ENCODE measurements at regions of chr2 and their contacts with region 1.

Region 1: DNA sequence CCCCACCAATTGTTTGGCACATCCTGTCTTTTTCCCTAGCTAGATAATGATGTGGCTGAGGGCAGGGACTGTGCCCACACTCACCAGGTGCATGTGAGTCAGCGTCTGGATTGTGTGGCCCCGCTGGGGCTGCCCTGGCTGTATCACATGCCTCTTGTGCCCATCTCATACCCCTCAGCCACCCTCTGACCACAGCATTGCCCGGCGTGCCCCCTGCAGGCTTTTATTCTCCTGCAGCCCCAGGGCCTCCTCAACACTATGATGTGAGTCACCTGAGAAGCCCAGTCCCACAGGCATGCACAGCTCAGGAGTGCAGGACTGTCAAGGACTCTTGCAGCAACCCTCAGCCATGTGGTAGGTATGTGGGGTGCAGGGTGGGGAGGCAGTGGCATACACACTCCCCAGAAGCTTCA is 14.8 kb upstream of the STEAP3 start:
- DNase-seq: peak; percentile 97 to 99
- H3K4me3 ChIP-seq: no peak overlapping the region
- H3K27ac ChIP-seq: peak overlapping the region; percentile 47
- H3K4me1 ChIP-seq: peaks cover 49% of the 10 kb centered on the region
- H3K27me3 ChIP-seq: no peaks in the 10 kb centered on the region
- CTCF ChIP-seq: peak; percentile 57

Region 2: GRCh38 chr2:119025762-119026389 is 182.9 kb before region 1 on chr2:
- CTCF ChIA-PET with region 1: no interaction called
- POLR2A ChIA-PET with region 1: no interaction called
- intact Hi-C with region 1: no loop called
- DNase-seq: no peak
- H3K4me3 ChIP-seq: no peak overlapping the region
- H3K27ac ChIP-seq: no peak overlapping the region
- H3K4me1 ChIP-seq: no peaks in the 10 kb centered on the region
- H3K27me3 ChIP-seq: no peaks in the 10 kb centered on the region
- CTCF ChIP-seq: no peak

Region 3: GRCh38 chr2:119240311-119241202 is 31.8 kb after region 1 on chr2:
- CTCF ChIA-PET with region 1: no interaction called
- POLR2A ChIA-PET with region 1: no interaction called
- intact Hi-C with region 1: loop called (anchors 2 kb)
- DNase-seq: peak; percentile 79 to 93
- H3K4me3 ChIP-seq: no peak overlapping the region
- H3K27ac ChIP-seq: no peak overlapping the region
- H3K4me1 ChIP-seq: peaks cover 25% of the 10 kb centered on the region
- H3K27me3 ChIP-seq: no peaks in the 10 kb centered on the region
- CTCF ChIP-seq: no peak

Region 4: GRCh38 chr2:119283860-119284331 is 75.1 kb after region 1 on chr2:
- CTCF ChIA-PET with region 1: no interaction called
- POLR2A ChIA-PET with region 1: no interaction called
- intact Hi-C with region 1: loop called (anchors 5 kb)
- DNase-seq: peak; percentile 82 to 97
- H3K4me3 ChIP-seq: peak overlapping the region; percentile 6; the same call in 1 of the 2 replicates
- H3K27ac ChIP-seq: peak overlapping the region; percentile 71
- H3K4me1 ChIP-seq: peaks cover 18% of the 10 kb centered on the region
- H3K27me3 ChIP-seq: no peaks in the 10 kb centered on the region
- CTCF ChIP-seq: no peak

Region 5: DNA sequence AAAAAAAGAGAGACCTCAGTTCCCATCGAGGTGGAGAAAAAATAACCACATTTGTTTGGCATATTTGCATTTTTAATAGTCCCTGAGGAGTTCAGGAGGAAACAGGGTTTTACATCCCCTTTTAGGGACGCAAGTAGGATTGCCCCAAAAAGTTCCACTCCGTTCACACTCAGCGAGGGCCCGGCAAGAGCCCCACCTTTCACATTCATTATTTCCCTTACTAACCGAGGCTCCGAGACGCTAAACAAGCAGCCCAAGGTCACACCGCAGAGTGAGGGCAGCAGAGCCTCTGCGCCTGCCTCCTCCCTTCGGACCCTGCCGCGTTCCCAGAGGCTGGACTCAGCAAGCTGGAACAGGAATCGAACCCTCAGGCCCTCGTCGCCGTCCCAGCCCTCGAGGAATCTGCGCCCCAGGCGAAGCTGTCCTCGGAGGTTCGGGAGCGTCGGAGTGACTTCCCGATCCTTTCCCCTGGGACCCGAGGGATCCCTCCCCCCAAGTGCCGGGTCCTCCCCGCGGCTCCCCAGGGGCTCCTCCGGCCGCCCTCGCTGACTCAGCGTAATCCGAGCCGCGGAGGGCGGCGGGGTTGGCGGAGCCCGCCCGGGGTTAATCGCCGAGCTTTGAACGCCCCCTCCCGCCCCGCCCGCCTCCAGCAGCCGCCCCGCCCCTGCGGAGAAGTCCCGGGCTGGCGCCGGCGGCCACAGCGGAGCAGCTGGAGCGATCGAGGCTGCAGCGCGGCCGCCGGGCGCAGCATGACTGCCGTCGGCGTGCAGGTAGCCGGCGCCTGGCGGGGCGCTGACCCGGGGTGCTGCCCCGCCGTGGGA is 222.6 kb after region 1 on chr2 and contains the start of gene TMEM37:
- CTCF ChIA-PET with region 1: no interaction called
- POLR2A ChIA-PET with region 1: no interaction called
- intact Hi-C with region 1: loop called (anchors 1 kb)
- DNase-seq: peak; percentile 63 to 80
- H3K4me3 ChIP-seq: peak within 1 kb of the TSS; percentile 53; the same call in 1 of the 2 replicates
- H3K27ac ChIP-seq: no peak within 1 kb of the TSS
- H3K4me1 ChIP-seq: peaks cover 36% of the 10 kb centered on the region
- H3K27me3 ChIP-seq: no peaks in the 10 kb centered on the region
- CTCF ChIP-seq: no peak
- total RNA-seq, gene TMEM37: 1.2 TPM in 2 replicates

Measured in PC-9 (cell line).